Posterior vena cava (tissue), 2 donors: ENCODE measurements at regions of chr19 and their contacts with region 1.

Region 1: GRCh38 chr19:16976441-16976840 is 50.2 kb downstream of the CPAMD8 start:
- DNase-seq: peak; percentile 37

Region 2: DNA sequence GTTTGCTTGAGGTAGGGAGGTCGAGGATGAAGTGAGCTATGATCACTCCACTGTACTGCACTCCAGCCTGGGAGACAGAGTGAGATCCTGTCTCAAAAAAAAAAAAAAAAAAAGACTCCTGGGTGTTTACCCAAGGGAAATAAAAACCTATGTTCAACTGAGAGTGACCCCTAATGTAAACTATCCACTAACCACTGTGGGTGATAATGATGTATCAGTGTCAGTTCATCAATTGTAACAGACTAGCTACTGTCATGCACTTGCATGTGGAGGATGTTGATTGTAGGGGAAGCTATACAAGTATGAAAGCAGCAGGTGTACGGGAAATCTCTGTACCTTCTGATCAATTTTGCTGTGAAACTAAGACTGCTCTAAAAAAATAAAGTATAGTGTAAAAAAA is 800.5 kb before region 1 on chr19:
- intact Hi-C with region 1: loop called in 1 of 2 experiments (anchors 5 kb)
- DNase-seq: no peak

Region 3: GRCh38 chr19:17005000-17005399 is 28.6 kb after region 1 on chr19:
- intact Hi-C with region 1: no loop called
- DNase-seq: no peak